ENCODE measurements at regions of chr6 and their contacts with region 1.

Region 1: DNA sequence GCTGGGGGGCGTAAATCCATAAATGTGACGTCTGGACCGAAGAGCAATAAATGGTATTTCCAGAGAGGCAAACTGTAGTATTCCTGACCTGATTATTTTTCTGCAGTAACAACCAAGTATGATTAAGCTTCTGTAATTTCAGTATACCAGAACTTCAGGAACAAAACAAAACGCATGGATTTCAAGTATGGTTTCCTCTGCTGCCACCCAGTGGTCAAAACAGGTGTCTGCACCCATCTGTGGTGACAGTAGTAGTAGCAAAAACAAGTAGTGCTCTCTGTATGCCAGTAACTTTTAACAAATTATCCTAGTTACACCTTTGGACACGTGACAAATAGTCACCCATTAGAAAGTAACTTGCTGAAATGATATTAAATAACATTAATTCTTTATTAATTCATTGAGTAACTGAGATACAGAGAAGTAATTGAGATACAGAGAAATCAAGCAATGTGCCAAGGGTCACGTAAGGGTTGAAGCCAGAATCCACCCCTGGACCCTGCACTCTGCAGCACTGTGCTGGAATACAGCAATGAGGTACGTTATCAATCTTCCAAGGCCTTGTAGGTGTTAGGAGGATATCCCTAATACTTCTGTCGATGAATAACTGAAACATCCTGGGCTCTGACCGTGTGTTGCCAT is 7.9 kb downstream of the CALHM4 start:
- DNase-seq: peak; percentile 79
- ATAC-seq: peak; percentile 87
- H3K4me3 Mint-ChIP-seq: no peak overlapping the region
- H3K27ac Mint-ChIP-seq: no peak overlapping the region
- H3K4me1 Mint-ChIP-seq: peaks cover 1% of the 10 kb centered on the region
- H3K27me3 Mint-ChIP-seq: peaks cover 11% of the 10 kb centered on the region

Region 2: GRCh38 chr6:116268589-116269293 is 292.8 kb before region 1 on chr6:
- CTCF ChIA-PET with region 1: interaction called, 11 read pairs
- POLR2A ChIA-PET with region 1: no interaction called
- intact Hi-C with region 1: no loop called
- DNase-seq: no peak
- ATAC-seq: peak; percentile 72
- H3K4me3 Mint-ChIP-seq: no peak overlapping the region
- H3K27ac Mint-ChIP-seq: no peak overlapping the region
- H3K4me1 Mint-ChIP-seq: peaks cover 28% of the 10 kb centered on the region
- H3K27me3 Mint-ChIP-seq: no peaks in the 10 kb centered on the region

Region 3: DNA sequence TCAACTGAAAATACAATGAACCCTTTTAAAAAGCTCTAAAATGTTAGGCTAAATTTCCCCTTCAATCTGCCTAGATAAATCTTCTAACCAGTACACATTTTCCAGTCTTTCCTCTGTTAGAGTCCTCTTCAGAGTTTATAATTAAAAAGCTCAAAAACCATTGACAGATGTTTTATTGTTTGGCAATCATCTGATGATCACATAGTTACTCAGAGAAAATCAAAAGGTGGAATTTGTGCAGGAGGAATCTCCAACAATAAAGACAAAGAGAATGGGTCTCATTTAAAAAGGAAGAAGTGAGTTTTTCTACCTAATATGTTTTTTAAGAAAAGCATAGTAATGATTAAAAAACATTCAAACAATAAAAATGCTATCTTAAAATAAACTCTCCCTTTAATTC is 19.1 kb before region 1 on chr6:
- CTCF ChIA-PET with region 1: interaction called, 19 read pairs
- POLR2A ChIA-PET with region 1: no interaction called
- intact Hi-C with region 1: no loop called
- DNase-seq: no peak
- ATAC-seq: no peak
- H3K4me3 Mint-ChIP-seq: no peak overlapping the region
- H3K27ac Mint-ChIP-seq: no peak overlapping the region
- H3K4me1 Mint-ChIP-seq: no peaks in the 10 kb centered on the region
- H3K27me3 Mint-ChIP-seq: peaks cover 17% of the 10 kb centered on the region

Measured in activated CD4-positive, alpha-beta T cell treated with anti-CD3 and anti-CD28 coated beads for 36 hours (primary cell).